Caco-2 (cell line): ENCODE measurements at regions of chr14 and their contacts with region 1.

Region 1: GRCh38 chr14:52068615-52069303 is at the start of gene NID2:
- DNase-seq: peak in 1 of 2 experiments; percentile 41
- H3K4me3 ChIP-seq: peak within 1 kb of the TSS; percentile 47
- H3K4me3 Mint-ChIP-seq: peak within 1 kb of the TSS; percentile 78
- H3K27ac Mint-ChIP-seq: peak within 1 kb of the TSS; percentile 63
- H3K4me1 ChIP-seq: peaks cover 17% of the 10 kb centered on the region; the same call in 1 of the 2 replicates
- H3K4me1 Mint-ChIP-seq: peaks cover 26% of the 10 kb centered on the region
- H3K27me3 ChIP-seq: no peaks in the 10 kb centered on the region
- H3K27me3 Mint-ChIP-seq: no peaks in the 10 kb centered on the region
- CTCF ChIP-seq: no peak
- total RNA-seq, gene NID2: 9.5 and 10.8 TPM in 2 replicates

Region 2: GRCh38 chr14:52015411-52016030 is 53.2 kb before region 1 on chr14:
- CTCF ChIA-PET with region 1: interaction called, 4 read pairs
- POLR2A ChIA-PET with region 1: no interaction called
- intact Hi-C with region 1: loop called (anchors 10 kb)
- DNase-seq: peak in 1 of 2 experiments; percentile 35
- H3K4me3 ChIP-seq: no peak overlapping the region
- H3K4me3 Mint-ChIP-seq: no peak overlapping the region
- H3K27ac Mint-ChIP-seq: no peak overlapping the region
- H3K4me1 ChIP-seq: no peaks in the 10 kb centered on the region
- H3K4me1 Mint-ChIP-seq: no peaks in the 10 kb centered on the region
- H3K27me3 ChIP-seq: no peaks in the 10 kb centered on the region
- H3K27me3 Mint-ChIP-seq: no peaks in the 10 kb centered on the region
- CTCF ChIP-seq: peak; percentile 33 to 36